ENCODE measurements at regions of chr20 and their contacts with region 1.

Region 1: DNA sequence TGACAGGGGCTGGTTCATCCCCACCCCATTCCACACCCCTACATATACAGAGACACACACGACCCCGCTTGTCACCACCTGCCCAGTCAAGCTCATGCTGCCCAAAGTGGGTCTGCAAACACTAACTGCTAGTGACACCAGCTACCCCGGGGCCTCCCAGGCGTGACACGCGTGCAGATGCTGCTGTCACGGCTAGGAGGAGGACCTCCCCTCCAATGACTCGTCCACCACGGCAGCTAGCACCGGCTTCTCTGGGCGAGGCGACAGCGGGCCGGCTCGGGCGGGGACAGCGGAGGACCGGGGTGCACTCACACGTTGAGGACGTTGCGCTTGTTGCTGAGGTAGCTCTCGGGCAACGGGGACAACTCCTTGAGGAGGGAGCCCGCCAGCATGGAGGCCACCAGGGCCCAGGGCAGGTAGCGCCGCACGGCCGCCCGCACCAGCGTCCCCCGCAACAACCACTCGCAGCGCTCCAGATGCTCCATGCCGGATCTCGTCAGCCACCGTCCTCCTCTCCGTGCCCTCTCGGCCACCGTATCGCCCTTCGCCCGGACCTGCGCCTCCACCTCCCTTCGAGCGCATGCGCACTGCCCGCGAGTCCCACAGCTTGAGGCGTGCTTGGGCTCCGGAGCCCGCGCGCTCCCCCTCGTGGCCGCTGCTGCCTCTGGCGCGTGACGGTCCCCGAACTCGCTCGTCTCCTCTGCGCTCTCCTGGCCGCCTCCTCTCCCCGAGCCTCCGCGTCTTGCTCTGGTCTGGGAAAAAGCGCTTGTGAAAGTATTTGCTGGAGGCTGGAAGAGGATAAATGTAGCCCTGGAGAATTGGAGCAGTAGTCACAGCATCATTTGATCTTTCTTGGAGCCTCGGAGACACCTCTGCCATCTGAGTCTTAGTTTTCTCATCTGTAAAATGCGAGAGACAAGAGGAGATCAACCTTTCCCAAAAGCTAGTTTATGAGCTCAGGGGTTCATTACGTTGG is at the start of gene FITM2:
- DNase-seq: peak; percentile 93 to 99
- H3K4me3 ChIP-seq: peak within 1 kb of the TSS; percentile 57 to 79 (median 76)
- H3K27ac ChIP-seq: no peak within 1 kb of the TSS
- H3K4me1 ChIP-seq: peaks cover 0 to 5% (median 2%) of the 10 kb centered on the region in 4 experiments; a peak in 2 of 7 replicates
- H3K27me3 ChIP-seq: peaks cover 0 to 18% (median 8%) of the 10 kb centered on the region in 4 experiments; a peak in 4 of 7 replicates
- CTCF ChIP-seq: peak; percentile 90 to 93 (median 92)
- EP300 ChIP-seq: no peak
- POLR2A ChIP-seq: 0 out of 3 replicates have a peak, but pooled peaks of 1 of the 2 experiments have one; percentile 31
- RAD21 ChIP-seq: peak; percentile 73 to 77
- total RNA-seq, gene FITM2: 2.0 and 2.1 TPM in 2 replicates

Region 2: GRCh38 chr20:44264287-44264686 is 46.7 kb before region 1 on chr20:
- CTCF ChIA-PET with region 1: interaction called, 17 read pairs
- POLR2A ChIA-PET with region 1: no interaction called
- DNase-seq: no peak
- H3K4me3 ChIP-seq: no peak overlapping the region
- H3K27ac ChIP-seq: no peak overlapping the region
- H3K4me1 ChIP-seq: no peaks in the 10 kb centered on the region; a peak in 1 of 7 replicates
- H3K27me3 ChIP-seq: no peaks in the 10 kb centered on the region
- CTCF ChIP-seq: no peak
- EP300 ChIP-seq: no peak
- POLR2A ChIP-seq: no peak
- RAD21 ChIP-seq: no peak

Region 3: GRCh38 chr20:44282192-44282591 is 28.8 kb before region 1 on chr20:
- CTCF ChIA-PET with region 1: interaction called, 18 read pairs
- POLR2A ChIA-PET with region 1: no interaction called
- DNase-seq: no peak
- H3K4me3 ChIP-seq: no peak overlapping the region
- H3K27ac ChIP-seq: no peak overlapping the region
- H3K4me1 ChIP-seq: no peaks in the 10 kb centered on the region
- H3K27me3 ChIP-seq: no peaks in the 10 kb centered on the region; a peak in 1 of 7 replicates
- CTCF ChIP-seq: no peak
- EP300 ChIP-seq: no peak
- POLR2A ChIP-seq: no peak
- RAD21 ChIP-seq: no peak

Region 4: DNA sequence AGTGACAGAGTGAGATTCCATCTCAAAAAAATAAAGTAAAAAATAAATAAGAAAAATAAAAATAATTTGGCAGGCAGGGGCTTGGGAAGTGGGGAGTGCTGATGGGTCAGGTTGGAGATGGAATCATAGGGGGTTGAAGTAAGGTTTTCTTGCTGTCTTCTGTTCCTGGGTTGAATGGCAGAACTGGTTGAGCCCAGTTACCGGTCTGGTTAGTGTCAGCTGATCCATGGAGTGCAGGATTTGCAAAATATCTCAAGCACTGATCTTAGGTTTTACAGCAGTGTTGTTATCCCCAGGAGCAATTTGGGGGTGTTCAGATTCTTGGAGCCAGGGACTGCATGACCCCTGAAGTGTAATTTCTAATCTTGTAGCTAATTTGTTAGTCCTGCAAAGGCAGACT is 16.3 kb before region 1 on chr20:
- CTCF ChIA-PET with region 1: interaction called, 22 read pairs
- POLR2A ChIA-PET with region 1: interaction called, 3 read pairs
- DNase-seq: no peak
- H3K4me3 ChIP-seq: no peak overlapping the region
- H3K27ac ChIP-seq: no peak overlapping the region
- H3K4me1 ChIP-seq: no peaks in the 10 kb centered on the region
- H3K27me3 ChIP-seq: no peaks in the 10 kb centered on the region
- CTCF ChIP-seq: no peak
- EP300 ChIP-seq: no peak
- POLR2A ChIP-seq: no peak
- RAD21 ChIP-seq: no peak

Region 5: GRCh38 chr20:44326391-44327159 is 15.6 kb after region 1 on chr20:
- CTCF ChIA-PET with region 1: interaction called, 40 read pairs
- POLR2A ChIA-PET with region 1: interaction called, 14 read pairs
- DNase-seq: peak in 1 of 2 experiments; percentile 68
- H3K4me3 ChIP-seq: peak overlapping the region in 3 of 4 experiments; percentile 7 to 53 (median 29); a peak in 5 of 8 replicates
- H3K27ac ChIP-seq: no peak overlapping the region
- H3K4me1 ChIP-seq: peaks cover 0 to 10% (median 4%) of the 10 kb centered on the region in 4 experiments; a peak in 6 of 7 replicates
- H3K27me3 ChIP-seq: no peaks in the 10 kb centered on the region; a peak in 1 of 7 replicates
- CTCF ChIP-seq: no peak
- EP300 ChIP-seq: peak; percentile 5 to 48; a peak in 2 of 3 replicates
- POLR2A ChIP-seq: 0 out of 3 replicates have a peak, but pooled peaks of 1 of the 2 experiments have one; percentile 32
- RAD21 ChIP-seq: no peak

Region 6: GRCh38 chr20:44552950-44553908 is 242.3 kb after region 1 on chr20:
- CTCF ChIA-PET with region 1: no interaction called
- POLR2A ChIA-PET with region 1: no interaction called
- DNase-seq: no peak
- H3K4me3 ChIP-seq: no peak overlapping the region
- H3K27ac ChIP-seq: no peak overlapping the region
- H3K4me1 ChIP-seq: no peaks in the 10 kb centered on the region
- H3K27me3 ChIP-seq: no peaks in the 10 kb centered on the region
- CTCF ChIP-seq: no peak
- EP300 ChIP-seq: no peak
- POLR2A ChIP-seq: no peak
- RAD21 ChIP-seq: no peak